ENCODE measurements at regions of chr15 and their contacts with region 1.

Region 1: GRCh38 chr15:68843425-68844311 is 23.0 kb upstream of the ANP32A start:
- DNase-seq: no peak
- H3K4me3 ChIP-seq: no peak overlapping the region
- H3K27ac ChIP-seq: no peak overlapping the region
- H3K4me1 ChIP-seq: no peaks in the 10 kb centered on the region
- H3K27me3 ChIP-seq: no peaks in the 10 kb centered on the region
- CTCF ChIP-seq: no peak

Region 2: DNA sequence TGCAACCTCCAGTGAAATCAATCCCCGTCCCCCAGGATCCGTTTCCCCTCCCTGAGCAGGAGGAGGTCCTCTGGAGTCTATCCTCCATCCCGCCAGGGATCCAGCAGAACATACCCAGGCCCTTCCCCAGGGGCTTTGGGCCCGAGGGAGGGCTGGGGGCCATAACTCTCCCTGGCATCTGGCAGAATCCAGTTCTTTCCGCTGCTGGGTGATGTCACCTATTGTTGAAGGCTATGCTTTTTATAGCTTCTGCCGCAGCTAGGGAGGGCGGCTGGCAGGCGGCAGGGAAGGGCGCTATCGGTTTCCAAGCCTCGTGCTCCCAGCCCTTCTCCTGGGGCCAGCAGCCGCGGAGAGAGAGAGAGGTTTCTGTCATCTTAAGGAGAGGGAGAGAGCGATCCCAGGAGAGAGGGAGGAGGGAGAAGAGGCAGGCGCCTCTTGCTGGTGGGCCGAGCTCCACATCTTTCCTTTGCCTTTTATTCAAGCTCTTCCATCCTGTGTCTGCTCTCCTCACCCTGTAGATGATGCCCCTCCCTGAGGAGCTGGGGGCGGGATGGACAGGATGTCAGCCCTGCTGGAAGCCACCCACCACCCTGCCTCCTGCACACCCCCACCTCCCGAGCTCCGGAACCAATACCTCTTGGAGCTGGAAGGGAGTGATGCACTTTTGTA is 143.1 kb before region 1 on chr15:
- CTCF ChIA-PET with region 1: interaction called, 11 read pairs
- POLR2A ChIA-PET with region 1: no interaction called
- intact Hi-C with region 1: no loop called
- DNase-seq: no peak
- H3K4me3 ChIP-seq: no peak overlapping the region
- H3K27ac ChIP-seq: no peak overlapping the region
- H3K4me1 ChIP-seq: no peaks in the 10 kb centered on the region
- H3K27me3 ChIP-seq: no peaks in the 10 kb centered on the region
- CTCF ChIP-seq: no peak

Region 3: GRCh38 chr15:68900027-68900426 is 56.4 kb after region 1 on chr15:
- CTCF ChIA-PET with region 1: no interaction called
- POLR2A ChIA-PET with region 1: no interaction called
- intact Hi-C with region 1: no loop called
- DNase-seq: no peak
- H3K4me3 ChIP-seq: no peak overlapping the region
- H3K27ac ChIP-seq: no peak overlapping the region
- H3K4me1 ChIP-seq: no peaks in the 10 kb centered on the region
- H3K27me3 ChIP-seq: no peaks in the 10 kb centered on the region
- CTCF ChIP-seq: no peak

Measured in PC-9 (cell line).